ENCODE measurements at regions of chr16 and their contacts with region 1.

Region 1: DNA sequence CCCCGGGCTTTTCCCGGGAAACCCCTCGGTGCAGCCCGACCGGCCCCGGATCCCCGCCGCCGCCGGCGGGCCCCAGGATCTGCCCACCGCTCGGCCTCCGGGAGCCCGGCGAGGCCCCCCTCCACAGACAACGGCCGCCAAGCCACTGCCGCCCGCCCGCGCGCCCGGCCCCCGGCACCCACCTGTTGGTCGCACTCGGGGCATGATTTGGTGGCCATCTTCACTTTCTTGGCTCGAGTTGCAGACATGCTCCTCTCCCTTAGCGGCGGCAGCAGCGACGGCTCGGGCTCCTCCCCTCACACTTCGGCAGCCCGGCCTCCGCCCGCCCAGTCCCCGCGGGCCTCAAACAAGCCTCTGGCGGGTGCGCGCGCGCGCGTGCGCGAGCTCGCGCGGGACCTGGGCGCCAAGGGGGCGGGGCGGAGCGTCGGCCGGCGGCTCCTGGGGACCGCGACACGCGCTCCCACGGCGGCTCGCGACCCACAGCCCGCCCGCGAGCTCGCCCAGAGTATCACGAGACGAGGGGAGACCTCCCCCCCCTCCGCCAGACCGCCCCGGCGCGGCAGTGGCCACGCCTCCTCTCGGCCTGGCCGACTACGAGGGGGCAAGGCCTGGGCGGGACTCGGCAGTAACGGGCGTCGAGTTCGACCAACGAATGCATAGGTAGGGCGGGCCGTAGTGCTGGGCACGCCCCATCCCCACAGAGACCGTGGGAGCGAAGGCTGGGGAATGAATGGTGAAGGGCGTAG is at the start of gene C16orf87:
- DNase-seq: peak; percentile 80 to 94
- H3K4me3 ChIP-seq: peak within 1 kb of the TSS; percentile 90 to 94
- H3K27ac ChIP-seq: peak within 1 kb of the TSS; percentile 72 to 94
- H3K4me1 ChIP-seq: peaks cover 2 to 5% of the 10 kb centered on the region in 2 donors
- H3K27me3 ChIP-seq: no peaks in the 10 kb centered on the region
- CTCF ChIP-seq: no peak
- total RNA-seq, gene C16orf87: under 0.01 TPM

Region 2: GRCh38 chr16:46789499-46790414 is 41.3 kb before region 1 on chr16:
- intact Hi-C with region 1: loop called (anchors 1 kb)
- DNase-seq: peak; percentile 38 to 85
- H3K4me3 ChIP-seq: peak overlapping the region; percentile 72 to 81
- H3K27ac ChIP-seq: peak overlapping the region; percentile 31 to 32
- H3K4me1 ChIP-seq: no peaks in the 10 kb centered on the region
- H3K27me3 ChIP-seq: no peaks in the 10 kb centered on the region
- CTCF ChIP-seq: no peak

Region 3: DNA sequence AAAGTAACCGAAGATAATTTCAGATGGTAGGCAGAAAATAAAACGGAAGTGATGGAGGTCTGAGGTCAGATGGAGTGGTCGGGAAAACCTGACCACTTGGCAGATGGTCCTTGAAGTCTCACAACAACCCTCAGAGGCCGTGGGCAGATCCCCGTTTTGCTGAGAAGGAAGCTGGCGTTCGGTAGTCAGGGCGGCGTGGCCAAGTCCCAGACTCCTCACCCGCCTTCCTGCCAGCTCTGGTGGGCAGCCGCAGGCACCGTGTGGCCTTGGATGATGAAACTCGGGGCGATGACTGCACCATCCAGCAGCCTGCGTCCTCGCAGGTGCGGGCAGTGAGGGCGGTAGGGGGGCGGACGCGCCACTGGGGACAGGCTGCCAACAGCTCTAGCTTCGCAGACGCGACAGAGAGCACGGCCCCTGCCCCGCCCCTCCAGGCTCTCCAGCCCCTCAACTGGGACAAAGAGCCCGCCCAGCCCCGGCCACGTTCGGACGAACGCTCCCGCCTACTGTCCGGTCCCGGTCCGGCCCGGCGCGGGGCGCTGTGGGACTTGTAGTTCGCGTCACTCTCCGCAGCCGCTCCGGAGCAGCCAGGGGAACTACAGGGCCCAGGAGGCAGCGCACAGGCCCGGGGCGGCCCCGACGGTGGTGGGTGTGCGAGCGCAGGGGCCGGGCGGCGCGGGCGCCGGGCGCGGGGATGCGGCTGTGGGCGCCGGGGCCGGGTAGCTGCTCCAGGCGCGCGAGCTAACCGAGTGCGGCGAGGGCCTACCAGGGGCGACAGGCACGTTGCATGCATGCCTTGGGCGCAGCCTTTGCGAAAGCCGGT is 52.8 kb after region 1 on chr16 and contains the start of gene GPT2:
- intact Hi-C with region 1: loop called (anchors 1 kb)
- DNase-seq: peak; percentile 87 to 99
- H3K4me3 ChIP-seq: peak within 1 kb of the TSS; percentile 84 to 93
- H3K27ac ChIP-seq: peak within 1 kb of the TSS; percentile 41 to 63
- H3K4me1 ChIP-seq: peaks cover 0 to 6% of the 10 kb centered on the region in 2 donors
- H3K27me3 ChIP-seq: no peaks in the 10 kb centered on the region
- CTCF ChIP-seq: peak in 1 of 3 experiments; percentile 10
- total RNA-seq, gene GPT2: 7.9 TPM

Region 4: DNA sequence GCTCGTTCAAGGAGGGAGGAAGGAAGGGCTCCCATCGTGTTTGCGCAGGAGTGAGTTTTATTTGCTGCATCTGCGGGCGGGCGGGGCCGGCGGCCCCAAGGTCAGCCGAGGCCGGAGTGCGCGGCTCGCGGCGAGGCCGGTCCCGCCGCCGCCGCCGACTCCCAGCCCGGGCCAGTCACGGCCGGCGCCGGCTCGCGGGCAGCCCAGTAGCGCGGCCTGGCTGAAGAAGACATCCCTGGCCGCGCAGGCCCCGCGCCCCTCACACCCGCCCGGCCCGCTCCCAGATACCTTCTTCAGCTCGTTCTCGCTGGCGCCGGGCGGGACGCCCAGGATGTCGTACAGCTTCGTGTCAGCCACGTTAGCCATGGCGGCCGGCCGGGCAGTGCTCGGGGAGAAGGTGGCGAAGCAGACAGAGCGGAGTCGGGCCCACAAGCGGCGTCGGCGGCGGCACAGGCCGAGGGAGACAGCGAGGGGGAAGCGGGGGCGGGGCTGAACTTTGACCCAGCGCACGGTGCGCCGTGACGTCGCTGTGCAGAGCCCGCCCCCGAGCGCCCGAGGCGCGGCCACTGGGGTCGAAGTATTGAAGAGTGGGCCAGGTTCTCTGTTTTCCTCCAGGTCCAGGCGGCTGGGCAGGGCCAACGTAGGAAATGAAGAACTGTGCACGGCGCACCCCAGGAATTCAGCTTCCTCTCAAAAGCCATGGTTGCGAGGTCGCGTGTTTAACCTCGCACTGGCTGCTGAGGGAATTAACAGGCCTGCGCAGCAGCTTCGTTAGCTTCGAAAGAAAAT is 142.3 kb after region 1 on chr16 and contains the start of gene DNAJA2:
- intact Hi-C with region 1: loop called (anchors 2 kb)
- DNase-seq: peak; percentile 47 to 94
- H3K4me3 ChIP-seq: peak within 1 kb of the TSS; percentile 87
- H3K27ac ChIP-seq: peak within 1 kb of the TSS; percentile 93 to 96
- H3K4me1 ChIP-seq: peaks cover 10 to 15% of the 10 kb centered on the region in 2 donors
- H3K27me3 ChIP-seq: no peaks in the 10 kb centered on the region
- CTCF ChIP-seq: no peak
- total RNA-seq, gene DNAJA2: 15.8 TPM

Region 5: GRCh38 chr16:48609652-48610029 is 1778.6 kb after region 1 on chr16:
- intact Hi-C with region 1: loop called (anchors 5 kb)
- DNase-seq: no peak
- H3K4me3 ChIP-seq: peak overlapping the region; percentile 88 to 99
- H3K27ac ChIP-seq: peak overlapping the region; percentile 91 to 95
- H3K4me1 ChIP-seq: peaks cover 4 to 18% of the 10 kb centered on the region in 2 donors
- H3K27me3 ChIP-seq: no peaks in the 10 kb centered on the region
- CTCF ChIP-seq: no peak